GM12878 (cell line): ENCODE measurements at regions of chr5 and their contacts with region 1.

Region 1: DNA sequence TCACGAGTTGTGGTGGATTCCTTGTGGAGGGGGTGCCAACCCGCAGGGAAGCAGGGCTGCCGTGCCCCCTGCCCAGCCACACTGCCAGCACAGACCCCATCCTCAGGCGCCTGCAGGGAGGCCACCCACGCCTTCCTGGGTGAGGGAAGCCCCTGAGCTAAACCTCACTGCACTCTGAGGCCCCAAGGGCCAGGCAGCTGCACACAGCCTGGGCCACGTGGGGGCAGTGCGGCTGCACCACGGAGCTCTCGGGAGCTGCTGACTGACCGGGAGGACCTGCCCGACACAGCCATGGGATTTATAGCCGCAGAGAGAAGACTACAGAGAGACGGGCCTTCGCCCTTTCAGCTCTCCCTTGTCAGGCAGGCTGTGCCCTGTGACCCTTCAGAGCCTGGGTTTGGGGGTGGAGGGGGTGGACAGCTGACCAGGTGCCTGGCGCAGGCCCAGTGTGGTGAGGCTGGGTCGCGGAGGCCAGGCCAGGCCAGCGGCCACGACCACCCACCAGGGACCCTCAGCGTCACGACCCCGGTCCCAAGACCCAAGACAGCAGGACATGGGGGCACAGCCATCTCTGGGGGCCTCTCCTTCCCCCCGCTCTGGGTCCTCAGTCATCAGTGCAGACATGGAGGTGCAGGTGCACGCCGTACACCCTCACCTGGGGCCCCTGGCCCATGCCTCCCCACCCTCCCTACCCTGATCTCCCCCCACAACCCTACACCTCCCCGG is 4.3 kb upstream of the AHRR start:
- DNase-seq: no peak
- ATAC-seq: peak; percentile 89
- H3K4me3 ChIP-seq: no peak overlapping the region
- H3K27ac ChIP-seq: no peak overlapping the region; the same call in 1 of the 2 replicates
- H3K4me1 ChIP-seq: peaks cover 23% of the 10 kb centered on the region
- H3K27me3 ChIP-seq: no peaks in the 10 kb centered on the region
- CTCF ChIP-seq: peak; percentile 95 to 99 (median 98); a peak in 5 of 6 replicates
- EP300 ChIP-seq: peak in 1 of 2 experiments; percentile 36; a peak in 1 of 4 replicates
- POLR2A ChIP-seq: no peak; the same call in 1 of the 2 replicates
- RAD21 ChIP-seq: peak; percentile 94

Region 2: DNA sequence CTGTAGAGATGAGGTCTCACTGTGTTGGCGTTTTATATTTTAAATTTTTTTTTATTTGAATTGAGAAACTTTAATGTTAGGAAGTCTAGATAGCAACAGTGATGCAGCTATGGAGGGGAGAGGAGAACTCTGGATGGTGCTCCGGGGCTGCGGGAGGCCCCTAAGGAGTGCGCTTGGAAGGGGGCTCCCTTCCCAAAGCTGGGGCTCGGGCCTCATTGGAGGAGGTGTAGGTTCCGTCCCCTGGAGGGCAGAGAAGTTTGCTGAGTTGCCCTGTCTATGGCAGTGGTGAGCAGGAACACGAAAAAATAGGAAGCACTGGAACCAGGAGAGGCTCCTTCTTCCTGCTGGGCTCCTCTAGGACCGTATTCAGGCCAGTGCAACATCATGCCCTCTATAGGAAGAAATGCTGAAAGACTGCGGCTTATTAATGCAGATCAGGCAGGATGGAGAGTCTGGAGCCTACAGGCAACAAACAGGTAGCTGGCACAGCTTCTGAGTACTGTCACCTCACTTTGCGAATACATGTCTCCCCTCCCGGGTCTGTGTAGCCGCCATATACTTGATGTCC is 20.4 kb after region 1 on chr5:
- CTCF ChIA-PET with region 1: interaction called, 8 read pairs
- POLR2A ChIA-PET with region 1: interaction called, 5 read pairs
- RAD21 ChIA-PET with region 1: interaction called, 10 read pairs
- SMC1A ChIA-PET with region 1: interaction called, 19 read pairs
- in situ Hi-C with region 1: no loop called
- intact Hi-C with region 1: no loop called
- DNase-seq: no peak
- ATAC-seq: no peak
- H3K4me3 ChIP-seq: no peak overlapping the region
- H3K27ac ChIP-seq: no peak overlapping the region
- H3K4me1 ChIP-seq: peaks cover 33% of the 10 kb centered on the region
- H3K27me3 ChIP-seq: no peaks in the 10 kb centered on the region
- CTCF ChIP-seq: peak in 1 of 3 experiments; percentile 20; a peak in 2 of 6 replicates
- EP300 ChIP-seq: no peak
- POLR2A ChIP-seq: no peak
- RAD21 ChIP-seq: no peak

Region 3: GRCh38 chr5:392431-392988 is 75.3 kb after region 1 on chr5:
- CTCF ChIA-PET with region 1: interaction called, 12 read pairs
- POLR2A ChIA-PET with region 1: interaction called, 5 read pairs
- RAD21 ChIA-PET with region 1: interaction called, 6 read pairs
- SMC1A ChIA-PET with region 1: interaction called, 4 read pairs
- in situ Hi-C with region 1: no loop called
- intact Hi-C with region 1: loop called (anchors 2 kb)
- DNase-seq: peak; percentile 95
- ATAC-seq: peak; percentile 95
- H3K4me3 ChIP-seq: peak overlapping the region; percentile 17; the same call in 1 of the 2 replicates
- H3K27ac ChIP-seq: peak overlapping the region; percentile 93
- H3K4me1 ChIP-seq: peaks cover 21% of the 10 kb centered on the region
- H3K27me3 ChIP-seq: no peaks in the 10 kb centered on the region
- CTCF ChIP-seq: no peak
- EP300 ChIP-seq: peak; percentile 81 to 82; a peak in 3 of 4 replicates
- POLR2A ChIP-seq: no peak; the same call in 1 of the 2 replicates
- RAD21 ChIP-seq: peak; percentile 4; the same call in 1 of the 2 replicates

Region 4: DNA sequence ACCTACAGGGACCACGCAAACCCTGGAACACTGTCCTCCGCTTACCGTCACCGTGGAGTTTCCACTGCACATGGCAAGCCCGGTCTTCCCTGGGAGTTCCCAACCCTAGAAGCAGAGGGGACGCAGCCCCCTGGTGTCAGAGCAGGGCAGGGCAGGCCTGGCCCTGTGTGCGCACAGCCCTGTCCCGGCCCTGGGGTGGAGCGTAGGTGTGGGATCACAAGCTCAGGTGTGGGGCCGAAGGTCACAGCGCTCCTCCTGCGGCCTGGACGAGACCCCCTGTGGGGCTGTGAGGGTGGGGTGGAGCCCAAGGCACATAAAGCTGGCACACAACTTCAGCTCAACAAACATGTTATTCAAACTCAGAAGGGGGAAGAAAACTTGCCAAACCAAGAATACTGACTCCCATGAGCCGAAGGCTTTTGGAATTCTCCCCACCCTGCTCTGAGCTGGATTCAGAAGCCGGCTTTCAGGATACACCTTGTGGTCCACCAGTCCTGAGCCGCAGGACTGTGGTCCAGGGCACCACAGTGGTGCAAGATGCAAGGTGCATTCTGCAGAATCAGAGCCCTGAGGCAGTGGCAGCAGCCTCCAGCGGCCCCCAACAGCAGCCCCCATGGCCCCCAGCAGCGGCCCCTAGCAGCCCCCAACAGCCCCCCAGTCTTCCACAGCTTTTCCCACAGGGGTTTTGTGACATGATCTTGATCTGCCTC is 113.9 kb after region 1 on chr5:
- CTCF ChIA-PET with region 1: interaction called, 126 read pairs
- POLR2A ChIA-PET with region 1: interaction called, 3 read pairs
- RAD21 ChIA-PET with region 1: interaction called, 82 read pairs
- SMC1A ChIA-PET with region 1: interaction called, 33 read pairs
- in situ Hi-C with region 1: loop called (anchors 5 kb)
- intact Hi-C with region 1: loop called (anchors 1 kb)
- DNase-seq: no peak
- ATAC-seq: peak; percentile 96
- H3K4me3 ChIP-seq: no peak overlapping the region
- H3K27ac ChIP-seq: no peak overlapping the region
- H3K4me1 ChIP-seq: peaks cover 8% of the 10 kb centered on the region
- H3K27me3 ChIP-seq: no peaks in the 10 kb centered on the region
- CTCF ChIP-seq: peak; percentile 75 to 89 (median 89)
- EP300 ChIP-seq: no peak
- POLR2A ChIP-seq: peak; percentile 57; the same call in 1 of the 2 replicates
- RAD21 ChIP-seq: peak; percentile 88

Region 5: GRCh38 chr5:543825-544674 is 226.8 kb after region 1 on chr5:
- CTCF ChIA-PET with region 1: interaction called, 3 read pairs
- POLR2A ChIA-PET with region 1: no interaction called
- RAD21 ChIA-PET with region 1: interaction called, 6 read pairs
- SMC1A ChIA-PET with region 1: no interaction called
- in situ Hi-C with region 1: no loop called
- intact Hi-C with region 1: loop called (anchors 10 kb)
- DNase-seq: peak; percentile 76
- ATAC-seq: peak; percentile 93
- H3K4me3 ChIP-seq: no peak overlapping the region
- H3K27ac ChIP-seq: peak overlapping the region; percentile 51; the same call in 1 of the 2 replicates
- H3K4me1 ChIP-seq: peaks cover 20% of the 10 kb centered on the region
- H3K27me3 ChIP-seq: no peaks in the 10 kb centered on the region; a peak in 2 of 4 replicates
- CTCF ChIP-seq: no peak
- EP300 ChIP-seq: peak; percentile 42 to 59; a peak in 3 of 4 replicates
- POLR2A ChIP-seq: no peak
- RAD21 ChIP-seq: no peak